ENCODE measurements at regions of chr2 and their contacts with region 1.

Region 1: GRCh38 chr2:186771850-186772611 is 76.9 kb downstream of the ZSWIM2 start:
- DNase-seq: peak; percentile 87 to 93
- H3K4me3 ChIP-seq: peak overlapping the region; percentile 42; the same call in 1 of the 2 replicates
- H3K27ac ChIP-seq: peak overlapping the region; percentile 99
- H3K4me1 ChIP-seq: peaks cover 30% of the 10 kb centered on the region
- H3K27me3 ChIP-seq: no peaks in the 10 kb centered on the region
- CTCF ChIP-seq: no peak

Region 2: DNA sequence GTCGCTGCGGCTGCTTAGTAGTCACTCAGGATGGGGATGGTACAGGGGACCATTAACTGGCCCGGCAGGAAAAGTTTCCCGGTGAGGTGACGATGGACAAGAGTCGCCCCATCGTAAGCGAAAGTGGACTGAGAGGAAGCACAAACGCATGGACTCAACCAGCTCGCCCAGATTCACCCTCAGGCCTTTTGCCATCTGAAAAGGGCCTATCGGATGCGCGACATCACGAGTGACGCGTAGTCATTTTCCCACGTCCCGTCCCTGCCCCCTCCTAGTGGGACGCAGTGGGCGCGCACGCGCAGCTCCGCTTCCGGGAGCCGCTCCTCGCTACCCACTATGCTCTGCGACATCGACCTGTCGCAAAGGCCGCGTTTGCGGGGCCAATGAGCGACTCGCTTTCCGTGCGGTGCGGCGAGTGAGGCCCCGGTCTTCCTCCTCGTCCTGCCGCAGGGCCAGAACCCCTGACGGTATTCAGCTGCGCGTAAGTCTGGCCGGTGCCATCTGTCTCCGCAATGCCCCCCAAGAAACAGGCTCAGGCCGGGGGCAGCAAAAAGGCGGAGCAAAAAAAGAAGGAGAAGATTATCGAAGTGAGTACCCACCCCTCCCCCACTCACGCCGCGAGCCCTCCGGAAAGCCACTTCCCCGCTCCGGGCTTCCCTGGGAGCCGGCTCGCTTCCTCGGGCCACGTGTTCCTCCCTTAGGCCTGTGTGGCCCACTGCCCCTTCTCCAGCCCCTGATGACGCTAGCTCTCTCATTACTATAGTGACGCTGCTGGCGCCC is 286.0 kb before region 1 on chr2 and contains the start of gene ZC3H15:
- CTCF ChIA-PET with region 1: no interaction called
- POLR2A ChIA-PET with region 1: no interaction called
- intact Hi-C with region 1: loop called (anchors 5 kb)
- DNase-seq: peak; percentile 85 to 89
- H3K4me3 ChIP-seq: peak within 1 kb of the TSS; percentile 96
- H3K27ac ChIP-seq: peak within 1 kb of the TSS; percentile 82
- H3K4me1 ChIP-seq: peaks cover 32% of the 10 kb centered on the region
- H3K27me3 ChIP-seq: no peaks in the 10 kb centered on the region
- CTCF ChIP-seq: no peak
- total RNA-seq, gene ZC3H15: 35.2 and 42.5 TPM in 2 replicates

Region 3: DNA sequence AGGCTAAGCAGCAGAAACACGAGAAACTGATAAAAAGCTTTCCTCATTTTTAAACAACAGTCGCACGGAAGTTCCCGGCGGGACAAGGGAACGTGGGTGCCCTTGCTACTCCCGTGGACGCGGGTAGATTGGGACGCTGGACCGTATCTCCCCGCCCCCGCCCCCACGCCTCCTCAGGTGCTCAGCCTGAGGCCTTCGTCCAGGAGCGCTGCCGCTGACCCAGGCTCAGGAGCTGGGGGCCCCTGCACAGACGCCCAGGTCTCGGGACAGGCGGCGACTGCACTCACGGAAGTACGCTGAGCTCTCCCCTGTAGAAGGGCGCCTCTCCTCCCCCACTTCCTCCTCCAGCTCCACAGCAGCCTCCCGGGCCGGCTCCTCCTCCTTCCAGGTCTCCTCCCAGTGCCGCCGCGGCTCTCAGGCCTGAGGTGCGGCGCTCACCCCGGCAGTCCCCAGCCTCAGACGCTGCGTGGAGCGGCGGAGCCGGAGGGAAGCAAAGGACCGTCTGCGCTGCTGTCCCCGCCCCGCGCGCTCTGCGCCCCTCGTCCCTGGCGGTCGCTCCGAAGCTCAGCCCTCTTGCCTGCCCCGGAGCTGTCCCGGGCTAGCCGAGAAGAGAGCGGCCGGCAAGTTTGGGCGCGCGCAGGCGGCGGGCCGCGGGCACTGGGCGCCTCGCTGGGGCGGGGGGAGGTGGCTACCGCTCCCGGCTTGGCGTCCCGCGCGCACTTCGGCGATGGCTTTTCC is 182.2 kb before region 1 on chr2 and contains the start of gene ITGAV:
- CTCF ChIA-PET with region 1: interaction called, 6 read pairs
- POLR2A ChIA-PET with region 1: no interaction called
- intact Hi-C with region 1: loop called (anchors 2 kb)
- DNase-seq: peak; percentile 77 to 88
- H3K4me3 ChIP-seq: peak within 1 kb of the TSS; percentile 62
- H3K27ac ChIP-seq: peak within 1 kb of the TSS; percentile 68
- H3K4me1 ChIP-seq: peaks cover 20% of the 10 kb centered on the region
- H3K27me3 ChIP-seq: no peaks in the 10 kb centered on the region
- CTCF ChIP-seq: no peak
- total RNA-seq, gene ITGAV: 25.0 and 28.0 TPM in 2 replicates

Region 4: GRCh38 chr2:186695081-186695756 is 76.8 kb before region 1 on chr2:
- CTCF ChIA-PET with region 1: no interaction called
- POLR2A ChIA-PET with region 1: interaction called, 8 read pairs
- intact Hi-C with region 1: loop called (anchors 2 kb)
- DNase-seq: no peak
- H3K4me3 ChIP-seq: no peak overlapping the region
- H3K27ac ChIP-seq: no peak overlapping the region
- H3K4me1 ChIP-seq: no peaks in the 10 kb centered on the region; the same call in 1 of the 2 replicates
- H3K27me3 ChIP-seq: no peaks in the 10 kb centered on the region
- CTCF ChIP-seq: no peak

Region 5: DNA sequence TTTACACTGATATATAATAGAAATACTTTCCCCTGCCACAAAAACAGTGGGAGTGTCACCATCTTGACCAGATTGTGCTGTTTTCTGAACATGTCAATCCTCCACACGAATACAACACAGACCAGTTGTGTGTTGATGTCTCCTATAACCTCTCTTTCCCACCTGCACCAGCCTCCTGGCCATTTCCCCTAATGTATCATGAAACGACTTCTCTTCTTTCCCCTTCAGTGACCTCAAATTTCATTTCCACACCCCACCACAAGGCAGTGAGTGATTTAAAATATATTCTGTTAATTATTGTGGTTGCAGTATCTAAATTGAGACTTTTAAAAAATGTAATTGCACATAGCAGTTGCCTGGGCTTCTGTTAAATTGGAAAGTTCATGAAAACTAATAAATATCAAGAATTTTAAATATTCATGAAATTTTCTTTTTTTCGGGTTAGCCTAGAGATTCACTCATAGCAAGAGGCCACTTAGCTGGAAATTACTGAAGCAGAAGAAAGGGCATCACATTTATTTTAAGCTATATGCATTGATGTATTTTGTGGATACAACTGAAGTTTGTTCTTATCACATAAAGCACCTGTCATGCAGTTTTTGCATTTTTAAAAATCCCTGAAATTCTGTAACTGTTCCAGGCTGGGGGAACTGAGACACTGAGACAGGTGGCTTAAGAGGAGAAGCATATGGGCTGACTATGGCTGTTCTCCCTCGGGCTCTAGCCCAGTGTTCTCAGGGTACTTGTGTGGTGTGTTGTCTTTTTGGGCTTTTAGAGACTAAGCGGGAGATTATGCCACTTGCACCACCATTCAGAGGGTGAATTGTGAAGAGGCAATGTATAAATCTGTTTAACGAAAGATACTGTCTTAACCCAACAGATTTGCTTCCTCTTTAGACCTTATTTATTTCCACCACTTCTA is 62.2 kb before region 1 on chr2:
- CTCF ChIA-PET with region 1: no interaction called
- POLR2A ChIA-PET with region 1: no interaction called
- intact Hi-C with region 1: no loop called
- DNase-seq: no peak
- H3K4me3 ChIP-seq: no peak overlapping the region
- H3K27ac ChIP-seq: no peak overlapping the region
- H3K4me1 ChIP-seq: no peaks in the 10 kb centered on the region
- H3K27me3 ChIP-seq: no peaks in the 10 kb centered on the region
- CTCF ChIP-seq: no peak

Region 6: DNA sequence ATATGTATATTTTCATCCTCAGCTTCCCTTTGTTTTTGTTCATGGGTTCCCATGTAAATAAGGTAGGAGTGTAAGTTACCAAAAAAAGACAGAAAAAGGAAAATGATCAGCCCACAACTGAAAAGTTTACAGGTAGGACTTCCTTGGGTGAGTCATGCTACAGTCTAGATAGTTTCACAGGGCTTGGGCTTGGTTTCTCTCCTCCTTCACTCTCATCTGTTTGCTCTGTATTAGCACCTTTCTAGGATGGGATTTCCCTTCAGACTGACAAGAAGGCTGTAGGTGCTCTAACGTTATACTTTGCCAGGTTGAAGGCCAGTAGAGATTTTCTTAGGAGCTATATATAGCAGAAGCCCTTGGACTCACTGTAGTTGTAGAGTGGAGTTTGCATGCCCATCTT is 20.2 kb before region 1 on chr2:
- CTCF ChIA-PET with region 1: no interaction called
- POLR2A ChIA-PET with region 1: interaction called, 3 read pairs
- intact Hi-C with region 1: loop called (anchors 1 kb)
- DNase-seq: peak in 1 of 2 experiments; percentile 46
- H3K4me3 ChIP-seq: no peak overlapping the region
- H3K27ac ChIP-seq: peak overlapping the region; percentile 60
- H3K4me1 ChIP-seq: peaks cover 12% of the 10 kb centered on the region
- H3K27me3 ChIP-seq: no peaks in the 10 kb centered on the region
- CTCF ChIP-seq: no peak

Region 7: GRCh38 chr2:186862869-186863709 is 91.1 kb after region 1 on chr2:
- CTCF ChIA-PET with region 1: no interaction called
- POLR2A ChIA-PET with region 1: no interaction called
- intact Hi-C with region 1: loop called (anchors 5 kb)
- DNase-seq: no peak
- H3K4me3 ChIP-seq: no peak overlapping the region
- H3K27ac ChIP-seq: no peak overlapping the region
- H3K4me1 ChIP-seq: no peaks in the 10 kb centered on the region
- H3K27me3 ChIP-seq: no peaks in the 10 kb centered on the region
- CTCF ChIP-seq: peak; percentile 74

Measured in PC-9 (cell line).